ENCODE measurements at regions of chr5 and their contacts with region 1.

Region 1: DNA sequence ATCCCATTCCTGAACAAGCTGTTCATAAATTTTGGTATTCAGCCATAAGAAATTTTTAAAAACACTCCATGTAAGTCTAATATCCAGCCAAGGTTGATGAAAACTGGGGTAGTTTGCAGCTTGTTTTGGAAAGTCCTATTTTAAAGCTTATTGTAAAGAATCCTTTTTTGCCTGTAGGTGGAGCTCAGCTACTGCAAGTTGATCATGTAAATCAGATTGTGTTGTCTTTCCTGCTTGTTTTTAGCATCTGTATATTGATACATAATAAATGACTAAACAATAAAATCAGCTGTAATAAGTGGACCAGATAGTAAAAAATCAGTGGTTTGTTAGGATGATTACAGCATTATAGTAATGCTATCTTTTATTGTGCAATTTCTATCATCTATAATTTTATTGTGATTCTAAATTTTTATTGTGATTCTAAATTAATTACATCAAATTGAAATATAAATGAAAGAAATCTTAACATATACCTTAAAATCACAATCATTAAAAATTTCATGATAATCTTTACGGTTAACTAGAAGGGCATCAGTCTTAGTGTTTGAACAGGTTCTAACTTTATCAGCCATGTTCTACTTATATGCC is 42.4 kb downstream of the CWC27 start:
- DNase-seq: peak; percentile 57
- ATAC-seq: peak; percentile 44; the same call in 1 of the 3 replicates
- H3K4me3 ChIP-seq: no peak overlapping the region
- H3K27ac ChIP-seq: no peak overlapping the region
- H3K4me1 ChIP-seq: no peaks in the 10 kb centered on the region
- H3K27me3 ChIP-seq: no peaks in the 10 kb centered on the region
- CTCF ChIP-seq: peak; percentile 74
- EP300 ChIP-seq: no peak
- POLR2A ChIP-seq: no peak
- RAD21 ChIP-seq: 0 out of 2 replicates have a peak, but pooled peaks have one; percentile 18

Region 2: GRCh38 chr5:64707191-64707590 is 104.0 kb before region 1 on chr5:
- CTCF ChIA-PET with region 1: no interaction called
- POLR2A ChIA-PET with region 1: no interaction called
- in situ Hi-C with region 1: no loop called
- intact Hi-C with region 1: no loop called
- DNase-seq: no peak
- ATAC-seq: no peak
- H3K4me3 ChIP-seq: no peak overlapping the region
- H3K27ac ChIP-seq: no peak overlapping the region
- H3K4me1 ChIP-seq: no peaks in the 10 kb centered on the region; the same call in 1 of the 2 replicates
- H3K27me3 ChIP-seq: no peaks in the 10 kb centered on the region
- CTCF ChIP-seq: no peak
- EP300 ChIP-seq: no peak
- POLR2A ChIP-seq: no peak
- RAD21 ChIP-seq: no peak

Region 3: DNA sequence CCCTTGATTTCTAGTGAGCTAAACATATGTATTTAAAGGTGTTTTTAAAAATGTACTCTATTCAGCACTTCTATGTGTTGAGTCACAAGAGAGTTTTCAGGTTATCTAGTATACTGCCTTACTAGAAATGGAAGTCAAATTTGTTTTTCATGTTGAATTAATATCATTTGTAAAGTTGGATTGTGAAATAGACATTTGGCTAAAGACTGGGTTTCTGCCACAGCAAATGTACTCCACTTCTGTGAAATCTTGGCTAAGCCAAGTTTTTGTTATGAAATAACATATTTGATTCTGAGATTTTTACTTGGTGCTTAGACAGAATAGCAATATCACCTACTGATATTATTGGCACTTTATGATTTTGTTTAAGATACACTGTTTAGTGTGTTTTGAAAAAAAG is 63.6 kb after region 1 on chr5:
- CTCF ChIA-PET with region 1: no interaction called
- POLR2A ChIA-PET with region 1: no interaction called
- in situ Hi-C with region 1: no loop called
- intact Hi-C with region 1: no loop called
- DNase-seq: no peak
- ATAC-seq: no peak
- H3K4me3 ChIP-seq: no peak overlapping the region
- H3K27ac ChIP-seq: no peak overlapping the region
- H3K4me1 ChIP-seq: no peaks in the 10 kb centered on the region
- H3K27me3 ChIP-seq: no peaks in the 10 kb centered on the region
- CTCF ChIP-seq: no peak
- EP300 ChIP-seq: no peak
- POLR2A ChIP-seq: no peak
- RAD21 ChIP-seq: no peak

Region 4: GRCh38 chr5:64965613-64966012 is 154.5 kb after region 1 on chr5:
- CTCF ChIA-PET with region 1: no interaction called
- POLR2A ChIA-PET with region 1: no interaction called
- in situ Hi-C with region 1: no loop called
- intact Hi-C with region 1: loop called (anchors 5 kb)
- DNase-seq: no peak
- ATAC-seq: no peak
- H3K4me3 ChIP-seq: no peak overlapping the region
- H3K27ac ChIP-seq: no peak overlapping the region
- H3K4me1 ChIP-seq: no peaks in the 10 kb centered on the region
- H3K27me3 ChIP-seq: no peaks in the 10 kb centered on the region
- CTCF ChIP-seq: no peak
- EP300 ChIP-seq: no peak
- POLR2A ChIP-seq: no peak
- RAD21 ChIP-seq: no peak

Region 5: DNA sequence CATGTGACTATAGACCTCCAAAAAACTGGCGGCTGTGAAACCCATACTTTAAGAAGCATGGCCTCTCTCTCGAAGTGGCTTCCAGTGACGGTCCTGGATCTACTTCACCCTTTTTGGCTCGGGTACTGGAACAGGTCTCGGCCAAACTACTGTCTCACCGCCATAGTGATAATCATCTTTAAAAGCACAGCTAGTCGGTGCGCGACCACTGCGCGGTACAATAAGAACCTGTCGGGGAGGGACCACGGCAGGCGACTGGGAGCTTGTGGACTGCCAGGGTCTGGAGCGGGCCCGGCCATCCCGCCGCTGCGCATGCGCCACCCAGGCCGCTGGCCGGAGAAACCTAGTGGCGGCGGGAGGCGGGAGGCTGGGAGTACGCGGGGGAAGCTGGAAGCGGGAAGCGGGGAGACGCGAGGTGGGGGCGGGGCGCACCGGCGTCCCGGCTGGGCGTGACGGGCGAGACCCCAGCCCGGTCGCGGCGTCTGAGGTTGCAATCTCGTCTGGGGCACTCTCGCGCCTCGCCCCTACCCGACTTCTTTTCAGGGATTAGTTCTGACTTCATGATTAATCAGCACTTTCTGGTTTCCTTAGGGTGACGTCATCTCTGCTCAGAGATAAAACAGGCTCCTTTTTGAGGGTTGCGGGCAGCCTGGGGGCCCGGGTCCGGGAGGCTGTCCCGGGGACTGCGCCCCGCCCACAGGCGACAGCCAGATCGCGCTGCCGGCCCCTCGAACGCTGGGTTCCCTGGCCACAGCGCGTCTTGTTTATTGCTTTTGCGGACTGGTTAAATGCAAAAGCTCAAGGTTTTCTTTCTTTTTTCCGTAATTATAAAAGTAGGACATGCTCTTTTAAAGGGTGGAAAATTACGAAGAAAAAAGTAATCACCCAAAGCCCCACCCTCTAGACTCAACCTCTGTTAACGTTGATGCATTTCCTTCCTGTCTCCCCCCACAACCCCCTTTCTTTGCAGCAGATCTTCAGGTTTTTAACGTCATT is 224.4 kb after region 1 on chr5:
- CTCF ChIA-PET with region 1: interaction called, 11 read pairs
- POLR2A ChIA-PET with region 1: interaction called, 4 read pairs
- in situ Hi-C with region 1: loop called (anchors 5 kb)
- intact Hi-C with region 1: loop called (anchors 1 kb)
- DNase-seq: peak; percentile 68
- ATAC-seq: peak; percentile 93
- H3K4me3 ChIP-seq: peak overlapping the region; percentile 62 to 77 (median 71)
- H3K27ac ChIP-seq: peak overlapping the region; percentile 20
- H3K4me1 ChIP-seq: peaks cover 36% of the 10 kb centered on the region
- H3K27me3 ChIP-seq: no peaks in the 10 kb centered on the region; a peak in 2 of 5 replicates
- CTCF ChIP-seq: no peak
- EP300 ChIP-seq: no peak
- POLR2A ChIP-seq: peak; percentile 30 to 47; a peak in 3 of 4 replicates
- RAD21 ChIP-seq: 0 out of 2 replicates have a peak, but pooled peaks have one; percentile 8

Region 6: GRCh38 chr5:65102828-65103711 is 291.9 kb after region 1 on chr5:
- CTCF ChIA-PET with region 1: no interaction called
- POLR2A ChIA-PET with region 1: no interaction called
- in situ Hi-C with region 1: no loop called
- intact Hi-C with region 1: loop called (anchors 1 kb)
- DNase-seq: peak; percentile 35
- ATAC-seq: peak; percentile 79
- H3K4me3 ChIP-seq: peak overlapping the region; percentile 75 to 77 (median 76)
- H3K27ac ChIP-seq: peak overlapping the region; percentile 46
- H3K4me1 ChIP-seq: peaks cover 21% of the 10 kb centered on the region
- H3K27me3 ChIP-seq: peaks cover 1 to 28% of the 10 kb centered on the region in 2 experiments; a peak in 3 of 5 replicates
- CTCF ChIP-seq: peak; percentile 51
- EP300 ChIP-seq: no peak
- POLR2A ChIP-seq: no peak
- RAD21 ChIP-seq: no peak; the same call in 1 of the 2 replicates

Region 7: GRCh38 chr5:65213921-65214525 is 402.9 kb after region 1 on chr5:
- CTCF ChIA-PET with region 1: interaction called, 3 read pairs
- POLR2A ChIA-PET with region 1: no interaction called
- in situ Hi-C with region 1: no loop called
- intact Hi-C with region 1: loop called (anchors 2 kb)
- DNase-seq: peak; percentile 41
- ATAC-seq: peak; percentile 94
- H3K4me3 ChIP-seq: no peak overlapping the region
- H3K27ac ChIP-seq: no peak overlapping the region
- H3K4me1 ChIP-seq: no peaks in the 10 kb centered on the region
- H3K27me3 ChIP-seq: no peaks in the 10 kb centered on the region
- CTCF ChIP-seq: peak; percentile 62
- EP300 ChIP-seq: no peak
- POLR2A ChIP-seq: no peak
- RAD21 ChIP-seq: no peak

Measured in HepG2 (cell line).